PC-3 (cell line): ENCODE measurements at regions of chr5 and their contacts with region 1.

Region 1: GRCh38 chr5:41510176-41510831 is at the start of gene PLCXD3:
- DNase-seq: peak; percentile 58
- ATAC-seq: peak; percentile 83
- H3K4me3 ChIP-seq: peak within 1 kb of the TSS; percentile 76
- H3K27ac ChIP-seq: peak within 1 kb of the TSS; percentile 77; the same call in 1 of the 2 replicates
- H3K4me1 ChIP-seq: peaks cover 49% of the 10 kb centered on the region
- H3K27me3 ChIP-seq: no peaks in the 10 kb centered on the region
- CTCF ChIP-seq: no peak
- total RNA-seq, gene PLCXD3: 5.0 TPM in 2 replicates

Region 2: DNA sequence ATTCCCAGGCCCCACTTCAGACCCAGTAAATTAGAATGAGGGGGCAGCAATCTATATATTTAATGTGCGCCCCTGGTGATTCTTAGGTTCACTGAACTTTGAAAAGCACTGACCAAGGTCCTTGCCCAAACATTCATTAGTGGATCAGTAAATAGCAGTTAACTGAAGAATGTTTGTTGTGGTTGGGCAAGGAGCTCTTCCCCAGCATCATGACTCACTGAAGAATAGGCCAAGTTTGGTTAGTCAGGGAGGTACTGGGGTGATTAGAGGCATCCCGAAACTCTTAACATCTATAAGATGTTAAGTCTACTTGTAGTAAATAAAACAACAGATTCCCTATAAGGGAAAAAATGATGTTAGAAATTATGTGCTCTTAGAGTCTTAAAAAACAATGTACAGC is 438.3 kb before region 1 on chr5:
- CTCF ChIA-PET with region 1: no interaction called
- POLR2A ChIA-PET with region 1: no interaction called
- intact Hi-C with region 1: no loop called
- DNase-seq: peak; percentile 91
- ATAC-seq: peak; percentile 100
- H3K4me3 ChIP-seq: no peak overlapping the region
- H3K27ac ChIP-seq: no peak overlapping the region
- H3K4me1 ChIP-seq: peaks cover 12% of the 10 kb centered on the region
- H3K27me3 ChIP-seq: no peaks in the 10 kb centered on the region
- CTCF ChIP-seq: no peak

Region 3: GRCh38 chr5:41414601-41415000 is 95.7 kb before region 1 on chr5:
- CTCF ChIA-PET with region 1: no interaction called
- POLR2A ChIA-PET with region 1: no interaction called
- intact Hi-C with region 1: loop called (anchors 2 kb)
- DNase-seq: peak; percentile 98
- ATAC-seq: peak; percentile 68
- H3K4me3 ChIP-seq: no peak overlapping the region
- H3K27ac ChIP-seq: peak overlapping the region; percentile 91
- H3K4me1 ChIP-seq: peaks cover 83% of the 10 kb centered on the region
- H3K27me3 ChIP-seq: no peaks in the 10 kb centered on the region
- CTCF ChIP-seq: no peak

Region 4: DNA sequence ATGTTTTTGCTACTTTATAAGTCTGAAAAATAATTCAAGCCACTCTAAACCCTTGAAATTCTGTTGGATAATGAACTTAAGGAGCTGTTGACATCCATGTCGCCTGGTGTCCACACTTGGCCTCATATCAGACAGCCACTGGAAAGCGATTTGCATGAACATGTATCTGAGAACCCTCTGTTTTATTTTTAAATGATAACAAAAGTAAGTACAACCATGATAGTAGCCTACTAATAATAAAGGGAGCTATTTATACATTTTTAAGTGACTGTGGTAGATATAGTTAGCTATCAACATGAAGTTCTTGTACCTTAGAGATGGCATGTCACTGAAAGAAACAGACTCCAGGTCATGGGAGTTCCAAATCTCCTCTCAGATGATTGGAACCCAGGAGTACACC is 53.2 kb before region 1 on chr5:
- CTCF ChIA-PET with region 1: no interaction called
- POLR2A ChIA-PET with region 1: no interaction called
- intact Hi-C with region 1: loop called (anchors 10 kb)
- DNase-seq: no peak
- ATAC-seq: no peak
- H3K4me3 ChIP-seq: no peak overlapping the region
- H3K27ac ChIP-seq: no peak overlapping the region
- H3K4me1 ChIP-seq: peaks cover 9% of the 10 kb centered on the region; the same call in 1 of the 2 replicates
- H3K27me3 ChIP-seq: no peaks in the 10 kb centered on the region
- CTCF ChIP-seq: no peak

Region 5: DNA sequence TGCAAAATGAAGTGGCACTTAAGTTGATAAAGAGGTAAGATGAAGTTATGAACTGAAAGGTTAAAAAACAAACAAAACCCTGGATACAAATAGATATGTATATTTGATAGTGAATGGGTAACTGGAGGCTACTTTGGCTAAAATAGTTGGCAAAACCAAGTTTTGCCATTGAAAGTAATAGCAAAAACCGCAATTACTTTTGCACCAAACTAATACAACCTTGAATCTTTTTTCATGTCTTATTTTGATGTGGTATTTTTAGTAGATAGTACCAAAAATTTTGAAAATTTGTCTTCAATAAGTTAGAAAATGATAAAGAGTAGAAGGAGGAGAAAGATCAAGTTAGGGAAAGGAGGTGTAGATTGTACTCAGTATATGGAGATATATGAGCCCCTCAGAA is 48.0 kb after region 1 on chr5:
- CTCF ChIA-PET with region 1: no interaction called
- POLR2A ChIA-PET with region 1: no interaction called
- intact Hi-C with region 1: no loop called
- DNase-seq: no peak
- ATAC-seq: no peak
- H3K4me3 ChIP-seq: no peak overlapping the region
- H3K27ac ChIP-seq: no peak overlapping the region
- H3K4me1 ChIP-seq: 0 out of 2 replicates have a peak, but pooled peaks cover 5% of the 10 kb centered on the region
- H3K27me3 ChIP-seq: no peaks in the 10 kb centered on the region
- CTCF ChIP-seq: no peak

Region 6: DNA sequence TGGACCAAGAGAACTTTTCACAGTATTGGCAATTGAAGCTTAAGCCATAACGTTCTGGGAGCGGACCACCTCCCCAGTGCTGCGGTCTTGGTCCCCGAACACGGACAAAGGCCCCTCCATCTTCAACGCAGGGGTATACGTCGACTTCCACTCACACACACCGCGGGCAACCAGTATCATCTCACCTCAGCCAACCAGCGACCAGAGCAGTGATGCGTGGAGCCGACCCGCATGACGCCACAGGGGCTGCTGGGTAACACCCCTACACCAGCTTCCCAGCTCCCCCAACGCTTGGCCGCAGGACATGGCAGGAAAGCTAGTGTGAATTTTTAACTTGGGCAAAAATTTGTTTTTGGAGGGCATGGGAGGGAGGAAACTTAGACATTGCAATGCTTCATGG is 77.4 kb after region 1 on chr5:
- CTCF ChIA-PET with region 1: no interaction called
- POLR2A ChIA-PET with region 1: no interaction called
- intact Hi-C with region 1: no loop called
- DNase-seq: no peak
- ATAC-seq: no peak
- H3K4me3 ChIP-seq: no peak overlapping the region
- H3K27ac ChIP-seq: no peak overlapping the region
- H3K4me1 ChIP-seq: no peaks in the 10 kb centered on the region
- H3K27me3 ChIP-seq: no peaks in the 10 kb centered on the region
- CTCF ChIP-seq: no peak